ENCODE measurements at regions of chr9 and their contacts with region 1.

Region 1: GRCh38 chr9:84072621-84073180 is 92.1 kb downstream of the RMI1 start:
- DNase-seq: no peak
- ATAC-seq: no peak
- H3K4me3 ChIP-seq: no peak overlapping the region
- H3K4me3 Mint-ChIP-seq: no peak overlapping the region
- H3K27ac ChIP-seq: no peak overlapping the region
- H3K27ac Mint-ChIP-seq: no peak overlapping the region
- H3K4me1 ChIP-seq: no peaks in the 10 kb centered on the region
- H3K4me1 Mint-ChIP-seq: peaks cover 0 to 2% (median 0%) of the 10 kb centered on the region in 7 donors
- H3K27me3 ChIP-seq: no peaks in the 10 kb centered on the region
- H3K27me3 Mint-ChIP-seq: peaks cover 2 to 12% (median 7%) of the 10 kb centered on the region in 5 donors

Region 2: DNA sequence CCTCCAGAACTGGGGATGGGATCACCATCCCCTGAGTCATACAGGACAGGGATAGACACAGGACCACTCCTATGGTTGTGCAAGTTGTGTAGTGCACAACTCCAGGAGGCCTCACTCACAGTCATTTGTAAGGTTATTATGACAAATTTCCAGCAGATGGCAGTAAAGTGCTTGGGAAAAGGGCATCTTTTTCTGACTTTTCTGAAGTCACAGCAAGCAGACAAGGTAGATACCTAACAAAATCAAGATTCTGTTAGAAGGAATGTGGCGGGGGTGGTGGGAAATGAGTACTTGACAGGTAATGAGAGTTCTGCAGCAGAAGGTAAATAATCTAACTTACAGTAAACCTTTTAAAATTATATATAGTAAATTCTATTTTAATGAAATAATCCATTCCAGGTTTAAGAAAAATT is 134.8 kb before region 1 on chr9:
- CTCF ChIA-PET with region 1: no interaction called
- POLR2A ChIA-PET with region 1: no interaction called
- intact Hi-C with region 1: no loop called
- DNase-seq: peak in 7 of 9 donors; percentile 44 to 74 (median 66)
- ATAC-seq: peak; percentile 84
- H3K4me3 ChIP-seq: no peak overlapping the region
- H3K4me3 Mint-ChIP-seq: no peak overlapping the region
- H3K27ac ChIP-seq: no peak overlapping the region
- H3K27ac Mint-ChIP-seq: no peak overlapping the region
- H3K4me1 ChIP-seq: no peaks in the 10 kb centered on the region
- H3K4me1 Mint-ChIP-seq: peaks cover 0 to 19% (median 0%) of the 10 kb centered on the region in 7 donors
- H3K27me3 ChIP-seq: no peaks in the 10 kb centered on the region
- H3K27me3 Mint-ChIP-seq: no peaks in the 10 kb centered on the region

Region 3: GRCh38 chr9:83956434-83957247 is 116.1 kb before region 1 on chr9:
- CTCF ChIA-PET with region 1: no interaction called
- POLR2A ChIA-PET with region 1: no interaction called
- intact Hi-C with region 1: no loop called
- DNase-seq: peak; percentile 25 to 73 (median 42)
- ATAC-seq: peak; percentile 76
- H3K4me3 ChIP-seq: peak overlapping the region; percentile 88
- H3K4me3 Mint-ChIP-seq: peak overlapping the region; percentile 94 to 98 (median 95)
- H3K27ac ChIP-seq: peak overlapping the region; percentile 77
- H3K27ac Mint-ChIP-seq: peak overlapping the region; percentile 88 to 99 (median 94)
- H3K4me1 ChIP-seq: peaks cover 4 to 13% of the 10 kb centered on the region in 2 donors
- H3K4me1 Mint-ChIP-seq: peaks cover 6 to 23% (median 19%) of the 10 kb centered on the region in 7 donors
- H3K27me3 ChIP-seq: no peaks in the 10 kb centered on the region
- H3K27me3 Mint-ChIP-seq: no peaks in the 10 kb centered on the region

Region 4: DNA sequence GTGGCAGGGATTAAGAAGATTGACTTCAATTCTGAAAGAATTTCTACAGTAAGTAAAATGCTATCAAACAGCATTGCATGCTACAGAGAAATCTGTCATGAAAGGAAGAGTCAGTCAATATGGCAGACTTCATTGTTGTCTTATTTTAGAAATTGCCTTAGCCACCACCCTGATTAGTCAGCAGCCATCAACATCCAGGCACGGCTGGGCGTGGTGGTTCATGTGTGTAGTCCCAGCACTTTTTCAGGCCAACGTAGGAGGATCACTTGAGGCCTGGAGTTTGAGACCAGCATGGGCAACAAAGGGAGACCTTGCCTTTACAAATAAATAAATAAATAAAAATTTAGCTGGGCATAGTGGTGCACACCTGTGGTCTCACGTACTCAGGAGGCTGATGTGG is 45.5 kb before region 1 on chr9:
- CTCF ChIA-PET with region 1: interaction called, 3 read pairs
- POLR2A ChIA-PET with region 1: no interaction called
- intact Hi-C with region 1: loop called in 1 of 2 experiments (anchors 1 kb)
- DNase-seq: no peak
- ATAC-seq: no peak
- H3K4me3 ChIP-seq: no peak overlapping the region
- H3K4me3 Mint-ChIP-seq: no peak overlapping the region
- H3K27ac ChIP-seq: no peak overlapping the region
- H3K27ac Mint-ChIP-seq: no peak overlapping the region
- H3K4me1 ChIP-seq: no peaks in the 10 kb centered on the region
- H3K4me1 Mint-ChIP-seq: no peaks in the 10 kb centered on the region
- H3K27me3 ChIP-seq: no peaks in the 10 kb centered on the region
- H3K27me3 Mint-ChIP-seq: peaks cover 8 to 17% (median 12%) of the 10 kb centered on the region in 5 donors

Region 5: GRCh38 chr9:84170521-84171141 is 97.9 kb after region 1 on chr9:
- CTCF ChIA-PET with region 1: no interaction called
- POLR2A ChIA-PET with region 1: no interaction called
- intact Hi-C with region 1: no loop called
- DNase-seq: no peak
- ATAC-seq: no peak
- H3K4me3 ChIP-seq: no peak overlapping the region
- H3K4me3 Mint-ChIP-seq: no peak overlapping the region
- H3K27ac ChIP-seq: no peak overlapping the region
- H3K27ac Mint-ChIP-seq: no peak overlapping the region
- H3K4me1 ChIP-seq: no peaks in the 10 kb centered on the region
- H3K4me1 Mint-ChIP-seq: peaks cover 0 to 5% (median 0%) of the 10 kb centered on the region in 7 donors
- H3K27me3 ChIP-seq: no peaks in the 10 kb centered on the region
- H3K27me3 Mint-ChIP-seq: peaks cover 0 to 8% (median 5%) of the 10 kb centered on the region in 5 donors

Measured in naive thymus-derived CD4-positive, alpha-beta T cell (primary cell).